ENCODE measurements at regions of chr10 and their contacts with region 1.

Region 1: GRCh38 chr10:133329491-133330202 is 7.0 kb downstream of the CALY start:
- DNase-seq: no peak
- ATAC-seq: peak; percentile 98
- H3K4me3 ChIP-seq: no peak overlapping the region
- H3K27ac ChIP-seq: no peak overlapping the region
- H3K4me1 ChIP-seq: no peaks in the 10 kb centered on the region
- H3K27me3 ChIP-seq: peaks cover 5 to 9% of the 10 kb centered on the region in 2 experiments
- CTCF ChIP-seq: peak; percentile 92 to 95 (median 93)
- EP300 ChIP-seq: no peak
- POLR2A ChIP-seq: no peak
- RAD21 ChIP-seq: peak; percentile 92

Region 2: DNA sequence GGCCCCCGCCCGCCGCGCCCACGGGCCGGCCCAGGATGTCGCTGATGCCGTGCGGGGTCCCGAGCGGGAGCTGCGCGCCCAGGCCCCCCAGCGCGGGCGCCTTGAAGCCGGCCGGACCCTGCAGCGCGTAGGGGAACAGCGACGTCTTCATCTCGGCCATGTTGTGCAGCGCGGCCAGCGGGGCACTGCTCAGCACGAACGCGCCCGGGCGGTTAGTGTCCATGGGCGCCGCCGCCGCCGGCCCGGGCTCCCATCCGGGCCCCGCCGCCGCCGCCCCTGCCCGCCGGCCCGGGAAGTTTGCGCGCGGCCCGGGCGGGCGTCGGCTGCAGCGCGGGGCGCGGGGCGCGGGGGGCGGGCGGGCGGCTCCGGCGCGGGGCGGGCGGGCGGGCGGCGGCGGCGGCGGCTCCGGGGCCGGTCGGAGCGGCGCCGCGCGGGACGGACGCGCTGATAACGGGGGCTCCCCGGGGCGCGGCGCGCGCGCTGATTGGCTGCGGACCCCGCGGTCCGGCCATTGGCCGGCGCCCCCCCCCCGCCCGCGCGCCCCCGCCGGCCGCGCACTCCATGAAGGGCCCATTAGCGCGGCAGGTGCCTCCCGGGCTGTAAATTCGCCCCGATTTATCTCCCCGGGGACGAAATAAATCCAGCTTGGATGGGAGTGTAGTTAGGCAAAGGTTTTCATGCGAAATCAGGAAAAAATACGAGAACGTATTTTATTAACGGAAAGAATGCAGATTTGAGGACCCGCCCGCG is 543.7 kb before region 1 on chr10 and contains the start of gene NKX6-2:
- CTCF ChIA-PET with region 1: no interaction called
- POLR2A ChIA-PET with region 1: no interaction called
- RAD21 ChIA-PET with region 1: no interaction called
- SMC1A ChIA-PET with region 1: no interaction called
- in situ Hi-C with region 1: no loop called
- intact Hi-C with region 1: no loop called
- DNase-seq: no peak
- ATAC-seq: no peak
- H3K4me3 ChIP-seq: no peak within 1 kb of the TSS
- H3K27ac ChIP-seq: no peak within 1 kb of the TSS
- H3K4me1 ChIP-seq: no peaks in the 10 kb centered on the region
- H3K27me3 ChIP-seq: no peaks in the 10 kb centered on the region
- CTCF ChIP-seq: no peak
- EP300 ChIP-seq: no peak
- POLR2A ChIP-seq: no peak
- RAD21 ChIP-seq: no peak
- polyA plus RNA-seq, gene NKX6-2: 0.45 to 1.8 TPM

Region 3: GRCh38 chr10:133315847-133316246 is 13.8 kb before region 1 on chr10:
- CTCF ChIA-PET with region 1: interaction called, 14 read pairs
- POLR2A ChIA-PET with region 1: no interaction called
- RAD21 ChIA-PET with region 1: interaction called, 4 read pairs
- SMC1A ChIA-PET with region 1: interaction called, 5 read pairs
- in situ Hi-C with region 1: no loop called
- intact Hi-C with region 1: no loop called
- DNase-seq: no peak
- ATAC-seq: peak; percentile 46; the same call in 2 of the 3 replicates
- H3K4me3 ChIP-seq: no peak overlapping the region
- H3K27ac ChIP-seq: no peak overlapping the region
- H3K4me1 ChIP-seq: no peaks in the 10 kb centered on the region
- H3K27me3 ChIP-seq: no peaks in the 10 kb centered on the region
- CTCF ChIP-seq: no peak
- EP300 ChIP-seq: no peak
- POLR2A ChIP-seq: no peak
- RAD21 ChIP-seq: no peak

Region 4: DNA sequence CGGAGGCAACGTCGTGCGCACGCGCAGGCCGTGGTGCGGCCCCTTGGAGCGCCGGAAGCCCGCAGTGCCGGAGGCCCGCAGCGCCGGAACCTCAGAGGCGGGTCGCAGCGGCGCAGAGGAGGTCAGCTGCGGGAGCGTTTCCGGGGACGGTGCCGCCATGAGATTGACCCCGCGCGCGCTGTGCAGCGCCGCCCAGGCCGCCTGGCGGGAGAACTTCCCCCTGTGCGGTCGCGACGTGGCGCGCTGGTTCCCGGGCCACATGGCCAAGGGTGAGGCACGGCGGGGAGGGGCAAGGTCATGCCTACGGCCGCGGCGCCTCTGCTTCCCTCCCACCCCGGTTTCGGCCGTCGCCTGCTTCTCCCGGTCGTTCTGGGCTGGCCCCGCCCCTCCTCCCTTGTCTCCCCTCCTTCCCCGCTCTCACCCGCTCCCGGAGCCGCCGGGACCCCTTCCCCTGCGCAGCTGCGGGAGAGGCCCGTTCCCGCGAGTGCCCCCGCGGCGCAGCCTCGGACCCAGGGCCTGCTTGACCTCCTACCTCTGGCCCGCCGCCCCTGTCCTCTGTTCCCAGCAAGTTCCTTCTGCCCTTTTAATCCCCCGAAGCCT is 64.5 kb after region 1 on chr10 and contains the start of gene MTG1:
- CTCF ChIA-PET with region 1: interaction called, 6 read pairs
- POLR2A ChIA-PET with region 1: interaction called, 3 read pairs
- RAD21 ChIA-PET with region 1: interaction called, 11 read pairs
- SMC1A ChIA-PET with region 1: interaction called, 5 read pairs
- in situ Hi-C with region 1: no loop called
- intact Hi-C with region 1: loop called (anchors 5 kb)
- DNase-seq: peak; percentile 65
- ATAC-seq: peak; percentile 85
- H3K4me3 ChIP-seq: peak within 1 kb of the TSS; percentile 80
- H3K27ac ChIP-seq: peak within 1 kb of the TSS; percentile 95
- H3K4me1 ChIP-seq: peaks cover 39% of the 10 kb centered on the region
- H3K27me3 ChIP-seq: no peaks in the 10 kb centered on the region
- CTCF ChIP-seq: peak in 1 of 3 experiments; percentile 16; a peak in 1 of 6 replicates
- EP300 ChIP-seq: peak; percentile 13 to 33; a peak in 1 of 4 replicates
- POLR2A ChIP-seq: peak; percentile 91
- RAD21 ChIP-seq: no peak
- polyA plus RNA-seq, gene MTG1: 6.2 to 9.2 TPM

Region 5: DNA sequence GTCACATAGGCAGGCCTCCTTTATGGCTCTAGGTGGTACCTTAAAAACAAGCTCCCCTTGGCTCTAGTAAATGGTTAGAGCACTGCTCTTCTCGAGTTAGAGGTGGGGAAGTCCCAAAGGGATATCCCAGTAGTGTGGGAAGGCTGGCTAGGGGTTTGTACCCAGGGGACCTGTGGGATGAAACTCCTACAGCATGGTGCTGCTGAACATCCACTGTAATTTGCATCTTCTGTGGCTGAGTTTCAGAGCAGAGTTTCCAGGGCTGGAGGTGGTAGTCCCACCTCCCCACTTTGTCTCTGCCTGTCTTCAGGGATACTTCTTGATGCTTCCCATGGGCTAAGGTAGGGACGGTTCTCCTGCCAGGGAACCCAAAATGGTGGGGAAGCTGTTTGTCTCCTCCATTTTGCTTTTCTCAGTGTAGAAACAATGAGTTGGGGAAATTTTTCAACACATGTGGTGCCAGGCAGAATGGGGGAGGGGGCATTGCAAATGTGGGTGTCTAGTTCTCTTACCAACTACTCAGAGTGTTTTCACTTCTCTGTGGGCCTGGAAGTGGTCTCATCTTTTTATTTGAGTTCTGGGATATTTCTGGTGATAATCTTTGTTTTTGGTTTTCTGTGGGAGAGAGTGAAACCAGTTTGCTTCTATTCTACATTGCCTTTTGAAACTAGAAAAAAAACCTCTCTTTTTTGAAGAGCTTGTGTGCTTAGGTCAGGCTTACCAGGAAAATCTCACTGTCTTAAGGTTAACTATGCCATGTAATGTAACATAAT is 160.4 kb after region 1 on chr10:
- CTCF ChIA-PET with region 1: interaction called, 5 read pairs
- POLR2A ChIA-PET with region 1: no interaction called
- RAD21 ChIA-PET with region 1: interaction called, 5 read pairs
- SMC1A ChIA-PET with region 1: interaction called, 3 read pairs
- in situ Hi-C with region 1: loop called (anchors 5 kb)
- intact Hi-C with region 1: no loop called
- DNase-seq: peak; percentile 75
- ATAC-seq: peak; percentile 59
- H3K4me3 ChIP-seq: no peak overlapping the region
- H3K27ac ChIP-seq: peak overlapping the region; percentile 69
- H3K4me1 ChIP-seq: peaks cover 14% of the 10 kb centered on the region
- H3K27me3 ChIP-seq: no peaks in the 10 kb centered on the region
- CTCF ChIP-seq: no peak
- EP300 ChIP-seq: no peak
- POLR2A ChIP-seq: no peak
- RAD21 ChIP-seq: no peak

Region 6: GRCh38 chr10:133608855-133609254 is 279.2 kb after region 1 on chr10:
- CTCF ChIA-PET with region 1: interaction called, 12 read pairs
- POLR2A ChIA-PET with region 1: no interaction called
- RAD21 ChIA-PET with region 1: no interaction called
- SMC1A ChIA-PET with region 1: no interaction called
- in situ Hi-C with region 1: no loop called
- intact Hi-C with region 1: loop called (anchors 2 kb)
- DNase-seq: no peak
- ATAC-seq: peak; percentile 54
- H3K4me3 ChIP-seq: no peak overlapping the region
- H3K27ac ChIP-seq: no peak overlapping the region
- H3K4me1 ChIP-seq: no peaks in the 10 kb centered on the region
- H3K27me3 ChIP-seq: no peaks in the 10 kb centered on the region; a peak in 1 of 4 replicates
- CTCF ChIP-seq: peak; percentile 37 to 56 (median 49); a peak in 5 of 6 replicates
- EP300 ChIP-seq: no peak
- POLR2A ChIP-seq: no peak
- RAD21 ChIP-seq: peak; percentile 48